CD14-positive monocyte (primary cell): ENCODE measurements at regions of chr5 and their contacts with region 1.

Region 1: GRCh38 chr5:56270568-56271392 is 37.6 kb upstream of the ANKRD55 start:
- DNase-seq: peak; percentile 79 to 83 (median 82)
- H3K4me3 ChIP-seq: no peak overlapping the region
- H3K4me3 Mint-ChIP-seq: peak overlapping the region; percentile 32 to 75
- H3K27ac ChIP-seq: no peak overlapping the region
- H3K27ac Mint-ChIP-seq: peak overlapping the region; percentile 23 to 81 (median 62)
- H3K4me1 ChIP-seq: peaks cover 14 to 16% of the 10 kb centered on the region in 2 donors
- H3K4me1 Mint-ChIP-seq: peaks cover 24% of the 10 kb centered on the region
- H3K27me3 ChIP-seq: no peaks in the 10 kb centered on the region
- H3K27me3 Mint-ChIP-seq: peaks cover 0 to 3% (median 0%) of the 10 kb centered on the region in 3 donors
- CTCF ChIP-seq: peak; percentile 98

Region 2: GRCh38 chr5:56838409-56839039 is 567.7 kb after region 1 on chr5:
- intact Hi-C with region 1: loop called (anchors 2 to 5 kb)
- DNase-seq: peak in 2 of 3 donors; percentile 69
- H3K4me3 ChIP-seq: peak overlapping the region in 1 of 3 experiments; percentile 43
- H3K4me3 Mint-ChIP-seq: peak overlapping the region; percentile 64 to 69
- H3K27ac ChIP-seq: peak overlapping the region in 1 of 2 donors; percentile 77
- H3K27ac Mint-ChIP-seq: peak overlapping the region; percentile 76 to 88 (median 86)
- H3K4me1 ChIP-seq: peaks cover 58 to 73% of the 10 kb centered on the region in 2 donors
- H3K4me1 Mint-ChIP-seq: peaks cover 89% of the 10 kb centered on the region
- H3K27me3 ChIP-seq: no peaks in the 10 kb centered on the region
- H3K27me3 Mint-ChIP-seq: no peaks in the 10 kb centered on the region
- CTCF ChIP-seq: peak; percentile 75